HAP-1 (cell line): ENCODE measurements at regions of chr6 and their contacts with region 1.

Region 1: GRCh38 chr6:53492860-53493634 is 51.9 kb downstream of the GCLC start:
- DNase-seq: peak; percentile 42 to 78
- H3K4me3 ChIP-seq: no peak overlapping the region
- H3K4me1 ChIP-seq: no peaks in the 10 kb centered on the region; the same call in 1 of the 2 replicates
- H3K27me3 ChIP-seq: no peaks in the 10 kb centered on the region; the same call in 1 of the 2 replicates

Region 2: DNA sequence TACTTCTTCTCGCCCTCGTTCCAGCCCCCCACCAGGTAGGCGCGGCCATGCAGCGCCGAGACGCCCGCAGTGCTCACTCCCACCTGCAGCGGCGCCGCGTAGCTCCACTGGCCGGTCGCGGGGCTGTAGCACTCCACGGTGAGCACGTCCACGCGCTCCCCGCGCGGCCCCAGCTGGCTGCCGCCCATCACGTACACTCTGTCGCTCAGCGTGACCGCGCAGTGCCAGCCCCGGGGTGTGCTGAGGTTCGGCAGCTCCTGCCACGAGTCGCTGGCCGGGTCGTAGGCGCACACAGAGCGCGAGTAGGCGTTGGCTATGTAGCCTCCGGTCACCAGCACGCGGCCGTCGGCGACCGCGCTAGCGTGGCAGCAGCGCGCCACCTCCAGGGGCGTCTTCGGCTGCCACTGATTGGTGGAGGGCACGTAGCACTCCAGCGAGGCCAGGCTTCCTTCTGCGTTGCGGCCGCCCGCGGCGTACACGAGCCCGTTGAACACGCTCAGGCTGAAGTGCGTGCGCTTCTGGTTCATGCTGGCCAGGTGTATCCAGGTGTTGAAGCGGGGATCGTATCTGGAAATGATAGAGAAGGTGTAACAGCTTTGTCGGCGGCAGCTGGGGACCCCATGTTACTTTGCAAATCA is 158.8 kb after region 1 on chr6:
- in situ Hi-C with region 1: loop called (anchors 10 kb)
- DNase-seq: peak; percentile 78 to 85
- H3K4me3 ChIP-seq: peak overlapping the region; percentile 37
- H3K4me1 ChIP-seq: peaks cover 3% of the 10 kb centered on the region; the same call in 1 of the 2 replicates
- H3K27me3 ChIP-seq: no peaks in the 10 kb centered on the region

Region 3: DNA sequence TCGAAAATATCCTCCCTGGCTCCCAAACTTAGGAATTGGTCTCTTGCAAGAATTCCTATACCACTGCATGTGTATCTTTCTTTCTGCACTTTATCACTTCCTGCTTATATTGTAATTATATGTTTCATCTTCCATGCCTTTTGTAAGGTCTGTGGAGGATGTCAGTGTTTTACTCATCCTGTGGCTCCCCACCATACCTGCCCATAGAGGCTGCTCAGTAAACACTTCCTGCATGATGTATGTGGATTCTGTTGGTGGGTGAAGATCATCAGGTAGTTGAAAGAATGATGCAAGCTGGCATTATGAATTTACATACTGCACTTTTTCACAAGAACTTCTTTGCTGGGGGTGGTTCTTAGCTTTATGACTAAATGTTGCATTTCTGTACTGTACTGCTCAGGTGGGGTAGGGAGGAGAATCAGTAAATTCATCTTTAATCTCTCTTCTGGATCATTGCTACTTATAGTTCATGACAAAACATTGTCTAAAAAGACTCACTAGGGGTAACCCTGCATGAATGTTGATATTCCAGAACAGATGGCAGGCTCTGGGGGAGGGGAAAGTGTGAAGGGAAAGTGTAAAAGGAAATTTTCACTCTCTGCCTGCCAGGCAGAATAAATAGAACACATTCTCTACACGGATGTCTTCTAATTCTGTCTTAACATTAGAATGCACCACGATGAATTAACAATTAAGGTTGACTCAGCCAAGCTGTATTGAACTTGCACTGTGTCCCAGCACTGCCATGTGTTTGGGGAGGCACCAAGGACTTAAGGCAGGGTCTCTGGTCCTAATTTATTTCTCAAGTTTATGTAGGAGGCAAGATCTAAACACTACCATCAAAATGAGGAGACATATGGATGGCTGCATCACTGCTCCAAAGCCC is 208.5 kb after region 1 on chr6:
- in situ Hi-C with region 1: no loop called
- DNase-seq: no peak
- H3K4me3 ChIP-seq: no peak overlapping the region
- H3K4me1 ChIP-seq: peaks cover 5% of the 10 kb centered on the region; the same call in 1 of the 2 replicates
- H3K27me3 ChIP-seq: no peaks in the 10 kb centered on the region

Region 4: DNA sequence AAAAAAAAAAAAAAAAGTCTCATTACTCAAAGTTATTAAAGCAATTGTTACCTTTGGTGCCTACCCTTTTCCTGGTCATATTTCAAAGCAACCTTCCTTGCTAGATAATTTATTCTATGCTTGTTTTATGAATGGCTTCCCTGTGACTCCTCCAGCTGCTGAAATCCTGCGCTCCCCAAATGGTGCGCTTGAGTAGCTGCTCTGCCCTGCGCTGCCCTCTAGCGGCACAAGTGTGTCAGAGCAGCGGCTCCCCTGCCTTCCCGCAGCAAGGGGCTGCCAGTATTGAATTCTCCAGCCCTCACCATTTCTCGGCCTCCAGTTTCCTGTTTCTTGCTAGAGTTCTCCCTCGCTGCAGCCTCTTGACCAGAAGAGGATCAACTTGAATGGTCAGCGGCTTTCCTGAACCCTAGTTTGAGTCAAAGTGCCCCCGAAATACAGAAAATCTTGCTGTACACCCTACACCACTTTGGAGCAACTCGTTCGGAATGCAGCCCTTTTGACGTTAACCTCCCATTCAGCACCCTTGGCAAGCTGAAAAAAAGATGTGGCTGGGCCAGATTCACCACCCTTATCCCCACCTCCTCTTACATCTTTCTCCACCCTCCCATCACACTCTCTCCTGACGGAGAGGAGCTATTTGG is 232.9 kb after region 1 on chr6:
- in situ Hi-C with region 1: loop called (anchors 10 kb)
- DNase-seq: peak; percentile 68 to 88
- H3K4me3 ChIP-seq: no peak overlapping the region
- H3K4me1 ChIP-seq: peaks cover 14% of the 10 kb centered on the region
- H3K27me3 ChIP-seq: no peaks in the 10 kb centered on the region